Activated naive CD4-positive, alpha-beta T cell treated with anti-CD3 and anti-CD28 coated beads for 36 hours (primary cell): ENCODE measurements at regions of chr9 and their contacts with region 1.

Region 1: DNA sequence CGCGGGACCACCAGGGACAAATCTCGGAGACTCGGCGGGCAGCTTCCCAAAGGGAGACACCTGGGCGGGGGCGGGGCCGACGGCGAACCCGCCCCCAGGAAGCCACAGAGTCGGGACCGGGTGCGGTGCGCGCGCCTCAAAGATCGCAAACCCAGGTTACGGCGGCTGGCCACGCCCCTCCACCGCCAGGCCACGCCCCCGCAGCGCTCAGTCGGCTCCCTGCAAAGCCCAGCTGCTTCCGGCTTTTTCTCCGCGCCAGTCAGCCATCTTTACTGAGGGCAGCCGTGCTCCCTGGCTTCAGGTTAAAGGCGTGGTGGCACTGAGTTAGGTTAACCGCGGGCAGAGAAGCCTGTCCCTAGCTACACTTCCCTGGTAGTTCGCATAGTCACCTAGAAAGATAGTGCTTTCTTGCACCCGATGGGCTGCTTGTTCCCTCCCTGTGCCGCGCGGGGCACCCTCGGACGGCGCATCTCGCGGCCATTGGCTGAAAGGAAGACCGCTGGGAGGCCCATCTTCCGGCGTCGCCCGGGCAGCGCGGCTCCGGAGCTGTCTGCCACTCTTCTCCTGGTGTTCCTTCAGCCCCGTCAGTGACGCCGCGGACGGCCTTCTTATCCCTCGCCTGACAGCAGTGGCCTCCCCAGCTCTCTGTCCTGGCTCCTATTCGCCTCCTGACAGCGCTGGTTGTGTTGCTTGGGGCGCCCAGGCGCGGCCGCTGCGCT is at the start of gene TBC1D2:
- DNase-seq: peak; percentile 98
- H3K4me3 Mint-ChIP-seq: peak within 1 kb of the TSS; percentile 86
- H3K27ac Mint-ChIP-seq: peak within 1 kb of the TSS; percentile 97
- H3K4me1 Mint-ChIP-seq: peaks cover 25% of the 10 kb centered on the region
- H3K27me3 Mint-ChIP-seq: peaks cover 2% of the 10 kb centered on the region
- total RNA-seq, gene TBC1D2: 2.4 to 2.5 TPM

Region 2: DNA sequence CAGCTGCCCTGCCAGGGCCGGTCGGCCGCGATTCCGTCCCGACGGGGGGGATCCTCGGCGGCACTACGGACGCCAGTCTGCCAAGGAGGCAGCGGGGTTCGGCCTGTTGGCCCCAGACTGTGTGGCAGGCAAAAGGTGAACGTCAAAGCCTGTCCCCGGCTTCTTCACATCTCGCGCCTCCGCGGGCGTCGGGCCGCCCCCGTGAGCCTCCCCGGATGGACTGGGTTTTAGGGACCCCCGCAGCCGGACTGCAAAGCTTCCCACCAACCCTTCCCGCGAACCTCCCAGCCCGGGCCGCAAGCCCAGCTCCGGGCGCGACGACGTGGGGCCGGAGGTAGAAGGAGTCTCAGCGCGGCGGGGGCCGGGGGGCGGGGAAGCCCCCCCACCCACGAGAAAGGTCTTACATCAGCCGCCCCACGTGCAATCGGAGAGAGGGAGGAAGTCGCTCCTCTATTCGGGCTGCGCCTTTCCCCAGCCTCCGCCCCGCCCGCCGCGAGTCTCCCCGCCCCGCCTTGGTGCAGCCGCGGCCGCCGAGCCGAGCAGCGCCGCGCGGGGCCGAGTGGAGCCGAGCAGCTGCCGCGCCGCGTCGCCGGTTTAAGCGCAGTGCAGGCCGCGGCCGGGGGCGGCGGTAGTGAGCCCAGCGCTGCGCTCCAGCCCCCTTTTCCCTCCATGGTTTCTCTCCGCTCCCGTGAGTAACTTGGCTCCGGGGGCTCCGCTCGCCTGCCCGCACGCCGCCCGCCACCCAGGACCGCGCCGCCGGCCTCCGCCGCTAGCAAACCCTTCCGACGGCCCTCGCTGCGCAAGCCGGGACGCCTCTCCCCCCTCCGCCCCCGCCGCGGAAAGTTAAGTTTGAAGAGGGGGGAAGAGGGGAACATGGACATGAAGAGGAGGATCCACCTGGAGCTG is 272.8 kb before region 1 on chr9 and contains the start of gene ANP32B:
- CTCF ChIA-PET with region 1: interaction called, 4 read pairs
- intact Hi-C with region 1: loop called (anchors 2 kb)
- DNase-seq: peak; percentile 96
- H3K4me3 Mint-ChIP-seq: peak within 1 kb of the TSS; percentile 82
- H3K27ac Mint-ChIP-seq: peak within 1 kb of the TSS; percentile 94
- H3K4me1 Mint-ChIP-seq: peaks cover 45% of the 10 kb centered on the region
- H3K27me3 Mint-ChIP-seq: no peaks in the 10 kb centered on the region
- total RNA-seq, gene ANP32B: 412 to 414 TPM

Region 3: GRCh38 chr9:98074115-98074990 is 181.4 kb before region 1 on chr9:
- CTCF ChIA-PET with region 1: interaction called, 12 read pairs
- intact Hi-C with region 1: loop called (anchors 1 kb)
- DNase-seq: peak; percentile 81
- H3K4me3 Mint-ChIP-seq: peak overlapping the region; percentile 51
- H3K27ac Mint-ChIP-seq: peak overlapping the region; percentile 94
- H3K4me1 Mint-ChIP-seq: peaks cover 34% of the 10 kb centered on the region
- H3K27me3 Mint-ChIP-seq: no peaks in the 10 kb centered on the region

Region 4: DNA sequence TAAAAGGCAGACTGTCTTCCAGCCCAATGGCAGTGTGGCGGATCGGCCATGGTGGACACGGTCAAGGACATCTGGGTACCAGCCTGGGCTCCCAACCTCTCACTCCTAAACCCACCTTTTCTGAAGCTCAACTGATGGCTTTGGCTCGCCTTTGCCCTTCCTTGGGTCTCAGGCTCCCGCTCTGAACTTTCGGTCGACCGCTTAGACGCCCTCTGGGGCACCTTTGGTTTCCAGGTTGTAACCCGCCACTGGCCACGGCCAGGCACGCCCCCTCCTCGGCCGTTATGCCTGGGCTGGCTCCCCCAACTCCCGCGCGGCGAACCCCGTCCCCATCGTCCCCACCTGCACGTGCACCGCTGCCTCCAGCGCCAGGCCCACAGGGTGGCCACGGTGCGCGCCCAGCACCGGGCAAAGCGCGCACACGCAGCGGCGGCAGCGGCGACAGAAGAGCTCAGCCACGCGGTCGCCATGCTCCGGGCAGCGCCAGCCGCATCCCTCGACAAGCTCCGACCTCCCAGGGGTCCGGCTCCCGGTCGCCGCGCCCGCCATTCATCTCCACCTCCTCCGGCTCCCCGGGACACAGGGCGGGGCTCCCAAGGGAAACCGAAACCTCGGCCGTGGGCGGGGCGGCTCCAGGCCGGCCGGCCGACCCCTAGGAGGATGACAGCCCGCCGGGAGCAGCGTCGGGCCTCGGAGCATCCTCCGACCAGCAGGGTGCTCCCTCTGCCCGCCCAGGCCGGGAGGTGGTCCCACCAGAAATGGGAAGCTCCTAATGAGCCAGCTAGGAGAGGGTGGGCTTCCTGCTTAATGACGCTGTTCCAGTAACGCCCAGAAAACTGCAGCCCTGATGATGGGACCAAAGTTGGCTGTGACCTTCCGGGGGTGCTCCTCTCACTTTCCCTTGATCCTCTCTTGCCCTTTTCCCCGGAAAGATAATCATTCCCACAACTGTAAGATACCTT is 136.8 kb before region 1 on chr9 and contains the start of gene TRIM14:
- CTCF ChIA-PET with region 1: interaction called, 8 read pairs
- intact Hi-C with region 1: loop called (anchors 1 kb)
- DNase-seq: peak; percentile 60
- H3K4me3 Mint-ChIP-seq: peak within 1 kb of the TSS; percentile 81
- H3K27ac Mint-ChIP-seq: peak within 1 kb of the TSS; percentile 92
- H3K4me1 Mint-ChIP-seq: peaks cover 44% of the 10 kb centered on the region
- H3K27me3 Mint-ChIP-seq: no peaks in the 10 kb centered on the region
- total RNA-seq, gene TRIM14: 49.6 to 55.0 TPM

Region 5: GRCh38 chr9:98207606-98208005 is 48.1 kb before region 1 on chr9:
- CTCF ChIA-PET with region 1: interaction called, 10 read pairs
- intact Hi-C with region 1: loop called (anchors 2 kb)
- DNase-seq: no peak
- H3K4me3 Mint-ChIP-seq: no peak overlapping the region
- H3K27ac Mint-ChIP-seq: no peak overlapping the region
- H3K4me1 Mint-ChIP-seq: peaks cover 2% of the 10 kb centered on the region
- H3K27me3 Mint-ChIP-seq: no peaks in the 10 kb centered on the region

Region 6: GRCh38 chr9:98303623-98304125 is 47.9 kb after region 1 on chr9:
- CTCF ChIA-PET with region 1: no interaction called
- intact Hi-C with region 1: no loop called
- DNase-seq: no peak
- H3K4me3 Mint-ChIP-seq: no peak overlapping the region
- H3K27ac Mint-ChIP-seq: no peak overlapping the region
- H3K4me1 Mint-ChIP-seq: no peaks in the 10 kb centered on the region
- H3K27me3 Mint-ChIP-seq: no peaks in the 10 kb centered on the region